ENCODE measurements at regions of chr22 and their contacts with region 1.

Region 1: DNA sequence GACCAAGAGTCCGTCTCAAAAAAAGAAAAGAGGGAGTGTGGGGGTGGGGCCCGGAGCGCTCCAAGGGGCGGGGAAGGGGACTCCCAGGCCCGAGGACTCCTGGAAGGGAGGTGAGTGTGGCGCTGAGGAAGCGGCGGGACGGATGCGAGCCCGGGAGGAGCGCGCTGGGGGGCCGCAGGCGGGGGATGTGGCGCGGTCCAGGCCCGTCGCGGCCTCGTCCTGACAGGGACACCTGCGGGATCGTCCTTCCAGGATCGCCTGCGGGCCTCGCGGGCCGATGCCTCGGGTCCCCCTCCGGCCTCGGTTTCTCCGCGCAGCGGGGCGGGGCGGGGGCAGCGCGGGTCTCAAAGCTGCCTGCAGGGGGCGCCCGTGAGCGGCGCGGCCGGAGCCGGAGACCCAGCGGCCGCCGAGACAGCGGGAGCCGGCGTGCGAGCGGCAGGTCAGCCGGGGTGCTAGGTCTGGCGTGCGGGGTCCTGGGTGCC is 3.8 kb upstream of the ADORA2A start:
- DNase-seq: peak; percentile 92

Region 2: GRCh38 chr22:24325105-24325757 is 98.3 kb before region 1 on chr22:
- intact Hi-C with region 1: loop called (anchors 5 kb)
- DNase-seq: no peak

Region 3: GRCh38 chr22:24486501-24486921 is 63.0 kb after region 1 on chr22:
- intact Hi-C with region 1: loop called (anchors 5 kb)
- DNase-seq: no peak

Region 4: GRCh38 chr22:24510637-24511625 is 87.4 kb after region 1 on chr22:
- intact Hi-C with region 1: loop called (anchors 5 kb)
- DNase-seq: no peak

Region 5: DNA sequence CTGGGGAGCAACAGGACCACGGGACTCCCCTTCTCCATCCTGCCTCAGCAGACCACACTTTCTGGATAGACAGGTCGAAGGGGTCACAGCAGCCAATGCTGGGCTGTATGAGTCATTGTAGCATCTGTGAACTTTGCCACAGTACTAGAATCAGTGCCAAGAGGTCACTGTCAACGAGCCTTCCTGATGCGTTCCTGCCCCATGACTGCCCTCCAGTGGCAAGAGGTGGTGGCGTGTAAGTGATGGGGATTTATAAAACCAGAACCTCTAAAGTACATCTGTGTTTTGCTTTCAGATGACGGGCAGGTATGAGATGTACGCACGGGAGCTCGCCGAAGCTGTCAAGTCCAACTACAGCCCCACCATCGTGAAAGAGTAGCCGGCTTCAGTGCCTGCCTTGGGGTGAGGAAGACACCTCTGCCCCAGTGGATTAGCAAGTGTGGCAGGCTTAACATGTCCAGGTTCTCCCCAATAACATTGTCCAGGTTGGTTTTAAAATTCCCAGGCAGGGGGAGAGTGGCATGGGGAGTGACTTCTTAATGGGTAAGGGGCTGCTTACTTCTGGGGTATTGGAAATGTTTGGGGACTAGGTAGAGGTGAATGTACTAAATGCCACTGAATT is 102.0 kb after region 1 on chr22:
- intact Hi-C with region 1: loop called (anchors 5 kb)
- DNase-seq: peak; percentile 90

Measured in cardiac septum (tissue), 1 donor.